SK-N-SH (cell line): ENCODE measurements at regions of chr1 and their contacts with region 1.

Region 1: DNA sequence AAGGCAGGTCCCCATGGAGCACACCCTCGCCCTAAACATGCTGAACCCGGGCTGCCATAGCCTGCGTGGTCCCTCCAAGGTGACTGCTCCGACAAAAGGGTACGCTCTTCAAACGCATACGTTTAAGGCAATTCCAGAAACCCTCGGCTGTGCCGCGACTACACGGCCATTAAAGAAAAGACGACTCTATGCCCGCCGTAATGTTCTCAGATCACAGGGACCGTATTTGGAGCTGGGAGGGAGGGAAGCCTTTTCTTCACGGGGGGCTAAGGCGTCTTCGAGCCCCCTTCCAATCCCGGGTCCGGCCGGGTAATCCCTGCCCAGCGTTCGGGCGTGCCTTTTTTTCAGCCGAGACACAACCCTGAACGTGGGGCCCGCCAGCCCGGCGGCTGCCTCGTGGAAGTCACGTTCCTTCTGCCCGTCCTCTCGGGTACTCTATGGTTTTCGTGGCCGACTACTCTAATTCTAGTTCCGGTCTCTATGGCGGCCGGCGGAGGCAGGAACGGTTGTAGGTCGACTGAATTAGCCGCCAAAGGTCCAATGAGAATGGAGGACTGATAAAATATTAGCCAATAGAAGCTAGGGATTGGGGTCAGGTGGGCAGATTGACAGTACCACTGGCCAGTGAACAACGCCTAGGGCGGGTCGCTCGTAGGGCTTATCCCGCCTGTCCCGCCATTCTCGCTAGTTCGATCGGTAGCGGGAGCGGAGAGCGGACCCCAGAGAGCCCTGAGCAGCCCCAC is at the start of gene YBX1:
- DNase-seq: peak; percentile 97
- H3K4me3 ChIP-seq: peak within 1 kb of the TSS; percentile 71 to 92
- H3K27ac ChIP-seq: peak within 1 kb of the TSS; percentile 82 to 97
- H3K4me1 ChIP-seq: peaks cover 10 to 27% of the 10 kb centered on the region in 2 experiments; a peak in 3 of 4 replicates
- H3K27me3 ChIP-seq: no peaks in the 10 kb centered on the region
- CTCF ChIP-seq: no peak
- EP300 ChIP-seq: no peak
- RAD21 ChIP-seq: no peak
- polyA plus RNA-seq, gene YBX1: 419 and 592 TPM in 2 replicates

Region 2: DNA sequence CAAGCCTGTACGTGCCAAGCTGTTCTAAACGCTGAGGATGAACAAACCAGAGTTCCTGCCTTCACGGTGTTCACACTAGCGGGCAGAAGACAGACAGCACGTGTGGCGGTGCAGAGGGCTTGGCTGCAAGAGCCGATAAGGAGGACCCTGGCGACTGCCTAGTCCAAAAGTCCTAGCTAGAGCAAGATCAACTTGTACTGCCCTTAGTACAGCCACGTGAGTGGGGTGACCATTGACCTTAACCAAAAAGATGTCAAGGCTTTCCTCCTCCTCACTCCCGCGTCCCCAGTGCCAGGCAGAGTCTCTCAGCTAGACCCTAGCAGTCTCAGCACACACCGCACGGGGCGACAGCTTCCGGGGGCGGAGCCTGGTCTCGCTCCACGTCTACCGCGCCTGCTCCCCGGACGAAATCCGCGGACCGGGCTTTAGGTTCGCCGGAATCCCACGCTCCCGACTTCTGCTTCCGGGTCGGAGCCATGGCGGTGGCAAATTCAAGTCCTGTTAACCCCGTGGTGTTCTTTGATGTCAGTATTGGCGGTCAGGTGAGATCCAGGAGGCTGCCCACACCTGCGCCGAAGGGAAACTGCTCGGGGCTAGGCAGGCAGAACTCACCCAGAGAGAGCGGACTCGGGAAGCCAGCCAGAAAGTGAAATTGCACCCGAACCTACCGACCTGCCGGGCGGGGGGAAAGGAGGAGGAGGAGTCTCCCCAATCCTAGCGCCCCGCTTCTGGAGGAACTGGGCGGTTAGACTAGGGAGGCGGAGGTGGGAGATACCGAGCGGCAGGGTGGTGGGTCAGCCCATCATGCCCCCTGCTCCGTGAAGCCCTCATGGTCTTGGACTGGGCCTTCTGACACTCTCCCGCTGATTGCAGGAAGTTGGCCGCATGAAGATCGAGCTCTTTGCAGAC is 23.7 kb before region 1 on chr1 and contains the start of gene PPIH:
- CTCF ChIA-PET with region 1: interaction called, 3 read pairs
- POLR2A ChIA-PET with region 1: interaction called, 14 read pairs
- DNase-seq: peak; percentile 92
- H3K4me3 ChIP-seq: peak within 1 kb of the TSS; percentile 72 to 96
- H3K27ac ChIP-seq: peak within 1 kb of the TSS; percentile 62 to 74; a peak in 3 of 4 replicates
- H3K4me1 ChIP-seq: peaks cover 0 to 12% of the 10 kb centered on the region in 2 experiments; a peak in 2 of 4 replicates
- H3K27me3 ChIP-seq: no peaks in the 10 kb centered on the region
- CTCF ChIP-seq: no peak
- EP300 ChIP-seq: no peak
- RAD21 ChIP-seq: no peak
- polyA plus RNA-seq, gene PPIH: 89.1 and 104 TPM in 2 replicates

Region 3: DNA sequence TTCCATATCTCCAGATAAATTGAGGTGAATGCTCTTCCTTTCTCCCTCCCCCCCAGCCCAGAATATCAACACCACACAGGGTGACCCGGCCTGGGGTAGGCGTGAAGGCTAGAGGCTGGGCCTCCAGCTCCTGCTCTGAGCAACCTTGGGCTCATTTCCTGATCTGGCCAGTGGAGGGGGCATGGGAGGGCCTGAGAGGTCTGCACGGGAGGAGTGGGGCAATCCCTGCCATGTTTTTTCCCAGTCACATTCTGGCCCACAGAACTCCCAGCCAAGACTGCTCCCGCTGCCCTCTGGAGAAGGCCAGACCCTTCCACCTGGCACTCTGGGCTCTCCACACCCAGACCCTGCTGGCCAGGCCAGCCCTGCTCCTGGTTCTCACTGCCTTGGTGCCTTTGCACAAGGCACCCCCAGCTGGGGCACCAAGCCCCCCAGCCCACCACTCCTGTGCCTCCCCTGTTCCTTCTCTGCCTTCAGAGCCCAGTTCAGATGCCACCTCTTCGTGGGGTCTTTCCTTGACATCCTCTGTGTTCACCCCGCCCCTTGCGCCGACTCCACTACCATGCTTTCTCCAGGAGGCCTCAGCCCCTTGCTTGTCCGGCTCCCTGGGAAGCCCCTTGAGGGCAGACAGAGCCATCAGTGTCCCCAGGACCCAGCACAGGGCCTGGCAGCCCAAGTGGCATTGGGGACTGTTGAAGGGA is 54.4 kb after region 1 on chr1:
- CTCF ChIA-PET with region 1: no interaction called
- POLR2A ChIA-PET with region 1: no interaction called
- DNase-seq: peak; percentile 62
- H3K4me3 ChIP-seq: no peak overlapping the region
- H3K27ac ChIP-seq: no peak overlapping the region
- H3K4me1 ChIP-seq: peaks cover 0 to 6% of the 10 kb centered on the region in 2 experiments; a peak in 1 of 4 replicates
- H3K27me3 ChIP-seq: no peaks in the 10 kb centered on the region
- CTCF ChIP-seq: no peak; the same call in 1 of the 2 replicates
- EP300 ChIP-seq: no peak
- RAD21 ChIP-seq: no peak

Region 4: GRCh38 chr1:42766741-42767509 is 85.0 kb after region 1 on chr1 and contains the starts of genes C1orf50 and P3H1:
- CTCF ChIA-PET with region 1: interaction called, 12 read pairs
- POLR2A ChIA-PET with region 1: interaction called, 11 read pairs
- DNase-seq: peak; percentile 97
- H3K4me3 ChIP-seq: peak within 1 kb of the TSS; percentile 77 to 91
- H3K27ac ChIP-seq: peak within 1 kb of the TSS; percentile 75 to 84
- H3K4me1 ChIP-seq: peaks cover 4 to 12% of the 10 kb centered on the region in 2 experiments; a peak in 2 of 4 replicates
- H3K27me3 ChIP-seq: no peaks in the 10 kb centered on the region
- CTCF ChIP-seq: no peak
- EP300 ChIP-seq: no peak
- RAD21 ChIP-seq: no peak
- polyA plus RNA-seq, gene C1orf50: 2.6 and 3.6 TPM in 2 replicates
- polyA plus RNA-seq, gene P3H1: 64.3 and 66.8 TPM in 2 replicates

Region 5: GRCh38 chr1:42801832-42802473 is 120.0 kb after region 1 on chr1:
- CTCF ChIA-PET with region 1: no interaction called
- POLR2A ChIA-PET with region 1: no interaction called
- DNase-seq: no peak
- H3K4me3 ChIP-seq: no peak overlapping the region
- H3K27ac ChIP-seq: no peak overlapping the region
- H3K4me1 ChIP-seq: no peaks in the 10 kb centered on the region
- H3K27me3 ChIP-seq: no peaks in the 10 kb centered on the region
- CTCF ChIP-seq: no peak
- EP300 ChIP-seq: no peak
- RAD21 ChIP-seq: no peak